Activated CD4-positive, alpha-beta memory T cell treated with anti-CD3 and anti-CD28 coated beads for 36 hours (primary cell): ENCODE measurements at regions of chr19 and their contacts with region 1.

Region 1: GRCh38 chr19:35436477-35437405 is 11.3 kb upstream of the FFAR2 start:
- DNase-seq: peak; percentile 51
- H3K4me3 Mint-ChIP-seq: peak overlapping the region; percentile 1
- H3K27ac Mint-ChIP-seq: no peak overlapping the region
- H3K4me1 Mint-ChIP-seq: peaks cover 18% of the 10 kb centered on the region
- H3K27me3 Mint-ChIP-seq: peaks cover 13% of the 10 kb centered on the region

Region 2: GRCh38 chr19:35462476-35462953 is 25.8 kb after region 1 on chr19:
- CTCF ChIA-PET with region 1: no interaction called
- POLR2A ChIA-PET with region 1: no interaction called
- intact Hi-C with region 1: no loop called
- DNase-seq: peak; percentile 56
- H3K4me3 Mint-ChIP-seq: peak overlapping the region; percentile 18
- H3K27ac Mint-ChIP-seq: peak overlapping the region; percentile 76
- H3K4me1 Mint-ChIP-seq: peaks cover 29% of the 10 kb centered on the region
- H3K27me3 Mint-ChIP-seq: peaks cover 2% of the 10 kb centered on the region

Region 3: GRCh38 chr19:36093146-36093662 is 656.5 kb after region 1 on chr19:
- CTCF ChIA-PET with region 1: no interaction called
- POLR2A ChIA-PET with region 1: no interaction called
- intact Hi-C with region 1: loop called (anchors 5 kb)
- DNase-seq: peak; percentile 59
- H3K4me3 Mint-ChIP-seq: no peak overlapping the region
- H3K27ac Mint-ChIP-seq: peak overlapping the region; percentile 49
- H3K4me1 Mint-ChIP-seq: peaks cover 16% of the 10 kb centered on the region
- H3K27me3 Mint-ChIP-seq: no peaks in the 10 kb centered on the region